WTC11 (cell line): ENCODE measurements at regions of chr19 and their contacts with region 1.

Region 1: DNA sequence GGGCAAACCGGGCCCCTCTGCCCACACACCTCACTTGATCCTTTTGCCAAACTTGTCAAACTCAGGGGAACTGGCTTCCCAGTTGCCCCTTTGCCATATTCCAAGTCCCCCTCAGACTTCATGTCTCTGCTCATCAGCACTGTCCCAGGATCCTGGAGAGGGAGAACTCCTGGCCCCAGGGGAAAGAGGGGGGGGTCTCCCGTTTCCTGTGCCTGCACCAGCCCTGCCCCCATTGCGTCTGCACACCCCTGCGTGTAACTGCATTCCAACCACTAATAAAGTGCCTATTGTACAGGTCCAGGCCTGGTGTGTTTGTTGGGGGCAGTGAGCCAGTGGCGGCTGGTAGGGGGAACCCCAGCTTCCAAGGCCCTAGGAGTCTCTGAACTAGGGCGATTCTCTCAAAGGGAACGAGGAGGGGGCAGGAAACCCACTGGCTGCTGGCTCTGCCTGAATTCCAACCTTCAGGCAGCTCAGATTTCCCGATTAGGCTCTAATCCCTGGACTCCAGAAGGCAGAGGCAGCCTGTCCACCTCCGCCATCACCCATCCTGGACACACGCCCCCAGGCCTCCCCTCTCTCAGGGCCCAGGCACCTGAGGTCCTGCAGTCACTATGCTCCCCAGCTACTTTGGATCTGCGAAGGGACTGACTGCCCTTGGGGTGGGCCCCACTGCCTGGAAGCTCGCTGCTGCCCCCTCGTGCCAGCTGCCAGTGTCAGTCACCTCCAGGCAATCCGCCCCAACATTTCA is 9.7 kb upstream of the ILF3 start:
- DNase-seq: peak; percentile 93
- ATAC-seq: peak; percentile 91
- H3K4me3 Mint-ChIP-seq: peak overlapping the region; percentile 14; the same call in 1 of the 2 replicates
- H3K27ac Mint-ChIP-seq: peak overlapping the region; percentile 93
- H3K4me1 Mint-ChIP-seq: peaks cover 31% of the 10 kb centered on the region
- H3K27me3 Mint-ChIP-seq: no peaks in the 10 kb centered on the region
- CTCF ChIP-seq: peak; percentile 61; the same call in 1 of the 2 replicates

Region 2: DNA sequence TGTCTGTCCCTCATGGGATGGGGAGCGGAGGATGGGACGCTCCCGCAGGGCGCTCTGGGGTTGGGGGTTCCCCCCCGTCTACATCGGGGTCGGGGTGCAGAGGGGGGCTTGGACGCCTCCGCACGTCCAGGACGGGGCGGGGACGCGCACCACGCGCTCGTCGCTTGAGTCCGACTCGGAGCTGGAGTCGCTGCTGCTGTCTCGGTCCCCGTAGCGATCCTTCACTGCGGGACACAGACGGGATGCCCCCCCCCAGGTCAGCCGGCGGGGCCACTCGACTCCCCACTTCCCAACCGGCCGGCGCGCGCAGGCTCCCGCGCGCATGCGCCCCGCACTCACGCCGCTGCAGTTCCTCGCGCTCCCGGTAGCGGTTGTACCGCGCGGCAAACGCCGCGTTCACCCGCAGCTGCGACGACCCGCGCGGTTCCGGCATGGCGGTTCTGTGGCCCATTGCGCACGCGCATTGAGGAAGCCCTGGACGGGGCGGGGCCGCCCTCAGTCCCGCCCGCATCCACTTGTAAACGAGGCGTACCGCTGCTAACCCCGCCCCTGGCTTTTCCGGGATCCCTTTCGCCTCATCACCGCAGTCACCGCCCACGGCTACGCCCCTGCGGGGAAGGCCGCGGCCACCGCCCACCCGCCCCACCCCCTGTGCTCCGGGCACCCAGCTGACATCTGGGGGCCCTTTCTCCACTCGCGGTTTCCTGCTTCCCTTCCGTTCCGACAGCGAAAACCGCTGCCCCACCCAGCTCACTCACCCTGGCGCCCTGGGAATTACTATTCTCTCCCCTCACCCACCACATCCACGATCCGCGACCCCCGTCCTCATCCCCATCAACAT is 78.6 kb before region 1 on chr19 and contains the start of gene KRI1:
- CTCF ChIA-PET with region 1: interaction called, 14 read pairs
- POLR2A ChIA-PET with region 1: no interaction called
- DNase-seq: peak; percentile 99
- ATAC-seq: peak; percentile 46
- H3K4me3 Mint-ChIP-seq: peak within 1 kb of the TSS; percentile 89
- H3K27ac Mint-ChIP-seq: peak within 1 kb of the TSS; percentile 87
- H3K4me1 Mint-ChIP-seq: peaks cover 32% of the 10 kb centered on the region
- H3K27me3 Mint-ChIP-seq: peaks cover 19% of the 10 kb centered on the region
- CTCF ChIP-seq: no peak
- total RNA-seq, gene KRI1: 43.6 to 50.9 TPM (median 49.3 TPM) in 3 replicates

Region 3: DNA sequence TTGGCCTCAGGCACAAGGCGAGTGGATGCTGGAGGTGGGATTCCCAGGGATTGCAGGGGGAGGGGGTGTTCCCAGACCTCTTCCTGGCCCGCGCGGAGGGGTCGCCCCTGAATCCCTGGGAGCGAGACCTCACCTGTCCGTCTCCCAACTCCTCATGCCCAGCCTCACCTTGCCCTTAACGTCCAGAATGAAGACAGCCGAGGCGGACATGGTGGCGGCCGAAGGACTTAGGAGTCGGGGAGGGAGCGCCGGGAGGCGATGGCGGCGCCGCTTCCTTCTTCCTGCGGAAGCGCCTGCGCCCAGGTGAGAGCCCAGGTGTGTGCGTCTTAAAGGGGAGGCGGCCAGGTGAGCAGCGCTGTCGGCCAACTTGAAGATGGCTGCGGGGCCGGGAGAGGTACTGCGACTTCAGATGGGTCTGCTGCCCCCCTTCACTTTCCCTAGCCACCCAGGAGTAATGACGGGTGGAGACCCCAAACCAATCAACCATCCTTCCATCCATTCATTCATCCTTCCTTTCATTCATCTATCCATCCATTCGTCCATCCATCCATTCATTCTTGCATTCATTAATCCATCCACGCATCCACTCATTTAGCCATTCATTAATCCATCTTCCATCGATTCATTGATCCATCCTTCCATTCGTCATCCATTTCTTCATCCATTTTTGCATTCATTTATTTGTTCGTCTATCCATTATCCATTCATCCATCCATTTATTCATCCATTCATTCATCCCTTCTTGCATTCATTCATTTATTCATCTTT is 57.2 kb before region 1 on chr19 and contains the start of gene AP1M2:
- CTCF ChIA-PET with region 1: interaction called, 276 read pairs
- POLR2A ChIA-PET with region 1: interaction called, 3 read pairs
- DNase-seq: peak; percentile 81
- ATAC-seq: peak; percentile 91
- H3K4me3 Mint-ChIP-seq: peak within 1 kb of the TSS; percentile 90
- H3K27ac Mint-ChIP-seq: peak within 1 kb of the TSS; percentile 69
- H3K4me1 Mint-ChIP-seq: peaks cover 13% of the 10 kb centered on the region
- H3K27me3 Mint-ChIP-seq: peaks cover 7% of the 10 kb centered on the region
- CTCF ChIP-seq: no peak
- total RNA-seq, gene AP1M2: 127 to 176 TPM (median 174 TPM) in 3 replicates

Region 4: DNA sequence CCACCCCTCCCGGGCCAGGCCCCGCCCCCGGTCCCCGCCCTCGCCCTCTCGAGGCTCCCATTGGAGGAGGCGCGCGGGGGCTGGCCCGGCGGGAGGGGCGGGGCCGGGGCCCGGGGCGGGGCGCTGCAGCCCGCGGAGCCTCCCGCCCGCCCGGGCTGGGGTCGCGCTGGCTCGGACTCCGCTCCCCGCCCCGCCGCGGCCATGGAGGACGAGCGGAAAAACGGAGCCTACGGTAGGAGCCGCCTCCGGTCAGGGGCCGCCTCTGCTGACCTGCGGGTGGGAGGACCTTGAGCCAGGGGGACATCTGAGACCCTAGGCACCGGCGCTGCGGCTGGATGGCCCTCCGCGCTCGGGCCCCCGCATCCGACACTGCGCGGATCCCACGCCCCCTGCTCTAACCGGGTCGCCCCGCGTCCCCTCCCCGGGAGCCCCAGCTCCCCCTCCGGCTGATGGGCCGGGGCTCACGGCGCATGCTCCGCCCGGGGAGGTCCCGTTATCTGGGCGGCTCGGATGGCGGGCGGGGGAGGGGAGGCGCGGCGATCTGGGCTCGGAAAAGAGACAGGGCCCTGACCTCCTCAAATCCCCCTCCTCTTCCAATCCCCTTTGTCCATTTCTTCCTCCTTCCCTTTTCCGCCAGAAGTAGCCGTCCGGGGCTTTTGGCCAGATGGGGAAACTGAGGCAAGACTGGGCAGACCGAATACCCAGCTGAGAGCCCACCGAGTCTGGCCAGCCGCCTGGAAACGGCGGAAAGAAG is 41.9 kb before region 1 on chr19:
- CTCF ChIA-PET with region 1: interaction called, 46 read pairs
- POLR2A ChIA-PET with region 1: interaction called, 3 read pairs
- DNase-seq: peak; percentile 91
- ATAC-seq: peak; percentile 95
- H3K4me3 Mint-ChIP-seq: peak overlapping the region; percentile 84
- H3K27ac Mint-ChIP-seq: no peak overlapping the region
- H3K4me1 Mint-ChIP-seq: peaks cover 12% of the 10 kb centered on the region
- H3K27me3 Mint-ChIP-seq: peaks cover 18% of the 10 kb centered on the region
- CTCF ChIP-seq: no peak

Region 5: GRCh38 chr19:10625003-10625776 is 19.2 kb before region 1 on chr19 and contains the start of gene SLC44A2:
- CTCF ChIA-PET with region 1: interaction called, 14 read pairs
- POLR2A ChIA-PET with region 1: interaction called, 6 read pairs
- DNase-seq: peak; percentile 91
- ATAC-seq: peak; percentile 97
- H3K4me3 Mint-ChIP-seq: peak within 1 kb of the TSS; percentile 86
- H3K27ac Mint-ChIP-seq: peak within 1 kb of the TSS; percentile 95
- H3K4me1 Mint-ChIP-seq: peaks cover 18% of the 10 kb centered on the region
- H3K27me3 Mint-ChIP-seq: no peaks in the 10 kb centered on the region
- CTCF ChIP-seq: no peak
- total RNA-seq, gene SLC44A2: 102 to 111 TPM (median 109 TPM) in 3 replicates

Region 6: GRCh38 chr19:10695401-10696398 is 51.3 kb after region 1 on chr19:
- CTCF ChIA-PET with region 1: interaction called, 27 read pairs
- POLR2A ChIA-PET with region 1: no interaction called
- DNase-seq: peak; percentile 99
- ATAC-seq: peak; percentile 88
- H3K4me3 Mint-ChIP-seq: peak overlapping the region; percentile 76
- H3K27ac Mint-ChIP-seq: peak overlapping the region; percentile 98
- H3K4me1 Mint-ChIP-seq: peaks cover 22% of the 10 kb centered on the region
- H3K27me3 Mint-ChIP-seq: peaks cover 5% of the 10 kb centered on the region
- CTCF ChIP-seq: no peak

Region 7: DNA sequence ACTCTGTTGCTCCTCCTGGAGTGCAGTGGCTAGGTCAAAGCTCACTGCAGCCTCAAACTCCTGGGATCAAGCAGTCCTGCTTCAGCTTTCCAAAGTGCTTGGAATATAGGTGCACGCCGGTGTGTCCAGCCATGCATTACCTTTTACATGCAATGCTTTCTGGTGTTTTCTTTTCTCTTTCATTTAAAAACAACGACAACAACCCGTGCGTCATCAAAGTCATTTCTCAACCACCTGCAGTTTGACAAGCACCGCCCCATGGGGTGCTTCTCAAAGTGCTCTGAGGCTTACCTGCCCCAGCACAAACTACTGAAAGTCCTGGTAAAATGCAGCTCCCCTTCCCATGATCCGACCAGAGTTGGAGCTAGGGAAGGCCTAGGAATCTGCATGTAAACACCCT is 63.9 kb after region 1 on chr19:
- CTCF ChIA-PET with region 1: no interaction called
- POLR2A ChIA-PET with region 1: no interaction called
- DNase-seq: no peak
- ATAC-seq: no peak
- H3K4me3 Mint-ChIP-seq: no peak overlapping the region
- H3K27ac Mint-ChIP-seq: no peak overlapping the region
- H3K4me1 Mint-ChIP-seq: peaks cover 5% of the 10 kb centered on the region
- H3K27me3 Mint-ChIP-seq: no peaks in the 10 kb centered on the region
- CTCF ChIP-seq: no peak